Posterior vena cava (tissue), 2 donors: ENCODE measurements at regions of chr2 and their contacts with region 1.

Region 1: GRCh38 chr2:160695402-160696086 is 201.9 kb upstream of the RBMS1 start:
- DNase-seq: no peak

Region 2: DNA sequence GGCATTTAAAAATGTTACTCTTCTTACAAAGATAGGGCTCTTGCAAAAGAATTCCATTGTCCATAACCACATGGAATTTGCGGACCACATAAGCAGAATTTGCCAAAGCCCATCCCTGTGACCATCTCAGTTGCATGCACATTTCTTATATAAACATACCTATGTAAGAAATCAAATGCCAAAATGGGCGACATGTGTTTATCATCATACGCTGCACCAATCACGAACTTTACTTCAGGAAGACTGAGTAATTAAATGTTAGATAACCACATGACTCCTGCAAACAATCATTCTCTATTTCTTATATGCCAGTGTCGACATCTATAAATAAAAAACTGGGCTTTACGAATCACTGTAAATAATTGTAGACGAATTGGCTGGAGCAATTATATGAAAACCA is 15.9 kb before region 1 on chr2:
- intact Hi-C with region 1: loop called in 1 of 2 experiments (anchors 2 kb)
- DNase-seq: no peak